Spleen (tissue), 13 donors: ENCODE measurements at regions of chr15 and their contacts with region 1.

Region 1: DNA sequence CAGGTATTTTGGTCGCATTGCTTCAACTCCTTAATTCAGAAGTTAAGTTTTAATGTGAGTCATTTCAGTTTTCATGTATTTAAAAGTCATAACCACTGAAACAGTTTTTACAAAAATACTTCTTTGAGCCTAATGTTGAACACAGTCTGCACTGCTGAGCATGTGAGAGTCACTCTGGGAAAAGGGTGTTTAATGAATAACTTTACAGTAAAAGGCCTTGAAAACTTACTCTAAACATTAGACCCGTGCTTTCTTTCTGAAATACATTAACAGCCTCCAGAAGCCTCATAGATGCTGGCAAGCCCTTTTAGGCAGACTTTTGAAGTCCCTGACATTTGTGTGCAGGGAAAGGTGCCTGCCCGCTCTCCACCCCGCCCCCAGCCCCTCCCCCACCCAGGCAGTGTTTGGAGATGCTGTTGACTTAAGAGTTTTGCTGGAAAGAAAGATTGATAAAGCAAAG is 68.9 kb upstream of the NR2F2 start:
- DNase-seq: no peak
- H3K4me3 ChIP-seq: no peak overlapping the region
- H3K27ac ChIP-seq: no peak overlapping the region
- H3K4me1 ChIP-seq: no peaks in the 10 kb centered on the region
- H3K27me3 ChIP-seq: no peaks in the 10 kb centered on the region
- CTCF ChIP-seq: no peak
- POLR2A ChIP-seq: no peak

Region 2: GRCh38 chr15:95793231-95793630 is 468.4 kb before region 1 on chr15:
- intact Hi-C with region 1: no loop called
- DNase-seq: no peak
- H3K4me3 ChIP-seq: no peak overlapping the region
- H3K27ac ChIP-seq: no peak overlapping the region
- H3K4me1 ChIP-seq: no peaks in the 10 kb centered on the region
- H3K27me3 ChIP-seq: no peaks in the 10 kb centered on the region
- CTCF ChIP-seq: no peak
- POLR2A ChIP-seq: no peak

Region 3: GRCh38 chr15:95968856-95969255 is 292.7 kb before region 1 on chr15:
- intact Hi-C with region 1: no loop called
- DNase-seq: no peak
- H3K4me3 ChIP-seq: no peak overlapping the region
- H3K27ac ChIP-seq: no peak overlapping the region
- H3K4me1 ChIP-seq: peaks cover 0 to 4% (median 0%) of the 10 kb centered on the region in 6 donors
- H3K27me3 ChIP-seq: no peaks in the 10 kb centered on the region
- CTCF ChIP-seq: no peak
- POLR2A ChIP-seq: no peak

Region 4: DNA sequence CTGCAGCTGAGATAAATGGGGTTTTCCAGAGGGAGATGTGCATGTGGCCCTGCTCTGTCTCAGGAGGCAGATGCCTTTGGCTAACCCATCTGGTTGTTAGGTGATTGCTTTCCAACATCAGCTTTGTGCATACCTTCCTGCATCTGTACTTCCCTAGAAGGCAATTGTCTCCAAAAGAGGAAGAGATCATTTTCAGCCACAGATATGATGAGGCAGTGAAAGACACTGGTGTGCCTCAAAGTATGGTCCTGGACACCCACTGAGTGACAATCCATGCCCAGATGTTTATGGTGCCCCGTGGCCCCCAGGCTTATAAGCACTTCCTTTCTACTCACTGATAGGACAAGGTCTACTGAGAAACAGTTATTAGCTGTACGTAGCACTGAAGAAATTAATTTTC is 48.6 kb before region 1 on chr15:
- intact Hi-C with region 1: loop called (anchors 5 kb)
- DNase-seq: no peak
- H3K4me3 ChIP-seq: no peak overlapping the region
- H3K27ac ChIP-seq: no peak overlapping the region
- H3K4me1 ChIP-seq: no peaks in the 10 kb centered on the region
- H3K27me3 ChIP-seq: no peaks in the 10 kb centered on the region
- CTCF ChIP-seq: no peak
- POLR2A ChIP-seq: no peak